ENCODE measurements at regions of chr5 and their contacts with region 1.

Region 1: GRCh38 chr5:17037751-17038150 is 101.7 kb upstream of the MYO10 start:
- DNase-seq: peak; percentile 85
- H3K4me3 ChIP-seq: no peak overlapping the region
- H3K27ac ChIP-seq: peak overlapping the region; percentile 81
- H3K4me1 ChIP-seq: peaks cover 19% of the 10 kb centered on the region
- H3K27me3 ChIP-seq: no peaks in the 10 kb centered on the region
- CTCF ChIP-seq: no peak
- POLR2A ChIP-seq: no peak

Region 2: DNA sequence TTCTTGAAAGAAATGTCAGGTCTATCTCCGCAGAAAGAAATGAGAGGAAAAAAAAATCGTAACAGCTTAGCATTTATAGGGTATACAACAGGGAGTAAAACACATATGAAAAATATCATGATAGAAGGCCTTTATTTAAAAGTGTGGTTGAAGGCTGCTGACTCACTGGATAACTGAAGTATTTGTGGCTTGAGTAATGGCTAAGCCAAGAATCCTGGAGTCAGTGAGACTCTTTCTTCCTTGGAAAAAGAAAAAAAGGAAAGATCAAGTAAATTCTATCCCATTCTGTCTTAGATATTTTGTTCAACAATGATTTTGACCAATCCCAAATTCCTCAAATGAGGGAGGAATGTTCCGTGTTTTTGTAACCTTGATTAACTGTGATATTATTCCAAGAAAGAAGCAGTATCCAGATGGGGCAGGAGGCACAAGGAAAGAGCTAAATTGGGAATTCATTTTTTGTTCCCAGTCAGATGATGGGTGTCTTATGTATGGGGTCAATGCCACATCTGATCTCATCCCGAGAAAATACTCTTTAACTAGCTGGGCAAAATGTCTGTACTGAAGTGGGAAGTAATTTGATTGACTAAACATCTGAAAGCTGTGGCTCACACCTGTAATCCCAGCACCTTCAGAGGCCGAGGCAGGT is 37.3 kb before region 1 on chr5:
- CTCF ChIA-PET with region 1: no interaction called
- POLR2A ChIA-PET with region 1: no interaction called
- dilution Hi-C with region 1: no loop called
- intact Hi-C with region 1: loop called (anchors 1 kb)
- DNase-seq: peak; percentile 77
- H3K4me3 ChIP-seq: no peak overlapping the region
- H3K27ac ChIP-seq: peak overlapping the region; percentile 97
- H3K4me1 ChIP-seq: peaks cover 32% of the 10 kb centered on the region
- H3K27me3 ChIP-seq: no peaks in the 10 kb centered on the region
- CTCF ChIP-seq: no peak
- POLR2A ChIP-seq: no peak